Transverse colon (tissue), 4 donors: ENCODE measurements at regions of chr7 and their contacts with region 1.

Region 1: GRCh38 chr7:26705567-26705966 is 158.8 kb downstream of the SKAP2 start:
- DNase-seq: no peak
- H3K4me3 ChIP-seq: no peak overlapping the region
- H3K27ac ChIP-seq: no peak overlapping the region
- H3K4me1 ChIP-seq: peaks cover 0 to 28% (median 12%) of the 10 kb centered on the region in 4 donors
- H3K27me3 ChIP-seq: no peaks in the 10 kb centered on the region
- CTCF ChIP-seq: no peak
- EP300 ChIP-seq: no peak
- POLR2A ChIP-seq: no peak

Region 2: DNA sequence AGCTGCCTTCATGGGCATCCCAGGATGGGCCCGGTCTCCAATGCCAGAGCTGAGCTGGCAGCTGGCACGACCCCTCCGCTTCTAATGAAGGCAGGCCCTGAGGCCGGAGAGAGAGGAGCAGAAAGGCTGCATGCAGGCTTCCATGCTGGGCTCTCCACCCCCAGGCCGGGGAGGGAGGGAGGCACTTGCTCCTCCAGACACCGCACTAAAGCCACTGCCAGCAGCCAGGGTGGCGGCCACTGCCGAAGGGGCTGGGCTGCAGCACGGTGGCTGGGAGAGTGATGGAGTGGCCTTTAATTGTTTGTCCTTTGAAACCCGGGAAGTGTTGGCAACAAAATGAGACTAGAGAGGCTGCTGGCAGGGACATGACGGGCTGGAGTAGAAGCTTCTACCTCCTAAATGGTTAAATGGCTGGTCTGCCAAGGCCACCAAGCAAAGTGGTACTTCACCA is 77.7 kb before region 1 on chr7:
- in situ Hi-C with region 1: no loop called
- intact Hi-C with region 1: no loop called
- DNase-seq: no peak
- H3K4me3 ChIP-seq: no peak overlapping the region
- H3K27ac ChIP-seq: no peak overlapping the region
- H3K4me1 ChIP-seq: no peaks in the 10 kb centered on the region
- H3K27me3 ChIP-seq: no peaks in the 10 kb centered on the region
- CTCF ChIP-seq: no peak
- EP300 ChIP-seq: no peak
- POLR2A ChIP-seq: no peak

Region 3: GRCh38 chr7:26843705-26844104 is 138.1 kb after region 1 on chr7:
- in situ Hi-C with region 1: loop called in 1 of 4 experiments (anchors 25 kb)
- intact Hi-C with region 1: no loop called
- DNase-seq: no peak
- H3K4me3 ChIP-seq: no peak overlapping the region
- H3K27ac ChIP-seq: no peak overlapping the region
- H3K4me1 ChIP-seq: peaks cover 0 to 10% (median 0%) of the 10 kb centered on the region in 4 donors
- H3K27me3 ChIP-seq: no peaks in the 10 kb centered on the region
- CTCF ChIP-seq: no peak
- EP300 ChIP-seq: no peak
- POLR2A ChIP-seq: no peak